Endothelial cell of umbilical vein (primary cell): ENCODE measurements at regions of chr6 and their contacts with region 1.

Region 1: DNA sequence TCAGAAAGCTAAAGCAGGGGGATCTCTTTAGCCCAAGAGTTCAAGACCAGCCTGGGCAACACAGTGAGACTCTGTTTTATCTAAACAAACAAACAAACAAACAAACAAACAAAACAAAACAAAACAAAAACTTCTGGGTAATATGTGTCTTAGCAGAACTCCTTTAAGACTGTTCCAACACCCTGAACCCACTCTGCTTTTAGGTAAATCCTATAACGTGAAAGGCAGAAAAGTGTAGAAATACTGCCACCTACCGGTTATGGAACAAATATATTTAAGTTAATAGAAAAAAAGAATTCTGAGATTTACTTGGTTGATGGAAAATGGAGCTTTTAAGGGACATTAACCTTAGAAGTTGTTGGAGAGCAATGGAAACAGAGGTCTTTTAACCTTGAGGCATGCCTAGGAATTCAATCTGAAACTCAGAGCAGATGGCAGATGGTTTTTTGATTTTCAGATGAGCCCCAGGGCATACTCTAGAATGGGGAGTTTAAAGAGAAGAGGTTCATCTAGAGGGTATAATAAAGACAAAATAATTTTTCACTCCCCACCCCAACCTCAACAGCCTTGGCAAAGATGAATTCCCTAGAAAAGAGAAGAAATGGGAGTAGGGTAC is 38.5 kb downstream of the SOD2 start:
- DNase-seq: peak; percentile 43
- H3K4me3 ChIP-seq: no peak overlapping the region
- H3K27ac ChIP-seq: no peak overlapping the region
- H3K4me1 ChIP-seq: no peaks in the 10 kb centered on the region
- H3K27me3 ChIP-seq: no peaks in the 10 kb centered on the region
- CTCF ChIP-seq: peak; percentile 17 to 27
- POLR2A ChIP-seq: no peak

Region 2: DNA sequence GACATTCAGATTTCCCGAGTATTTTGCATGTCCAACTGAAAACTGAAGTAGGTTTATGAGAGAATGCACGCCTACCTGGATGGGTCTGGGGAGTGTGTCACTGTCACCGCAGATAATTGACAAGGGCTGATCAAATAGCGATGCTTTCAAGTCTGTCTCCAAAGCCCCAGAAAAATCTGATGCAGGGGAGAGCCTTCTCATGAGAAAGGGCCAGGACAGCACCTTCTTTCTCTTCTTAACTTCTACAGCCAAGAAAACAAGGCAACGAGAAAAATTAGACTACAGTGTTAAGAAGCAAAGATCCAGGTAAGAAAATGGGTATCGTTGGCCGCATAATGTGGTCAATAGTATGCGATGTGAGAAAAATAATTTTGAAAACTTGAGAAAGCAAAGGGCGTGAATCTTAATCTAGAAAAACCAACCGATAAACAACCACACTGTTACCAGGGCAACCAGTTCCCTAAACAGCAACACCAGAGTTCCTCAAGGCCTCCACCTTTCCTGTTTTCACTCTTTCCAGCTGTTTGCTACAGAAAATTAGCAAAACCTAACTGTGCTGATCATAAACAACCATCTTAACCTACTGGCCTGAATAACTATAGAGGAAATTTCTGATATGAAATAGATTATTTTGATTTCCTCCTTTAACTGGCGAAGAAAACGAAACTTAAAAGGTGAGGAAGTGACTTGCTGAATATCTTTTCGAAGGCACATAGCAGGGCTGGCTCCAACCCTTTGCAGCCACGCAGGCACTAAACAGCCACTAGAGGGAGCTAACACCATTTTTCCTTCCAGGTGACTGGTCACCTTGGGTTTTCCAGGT is 612.4 kb before region 1 on chr6:
- CTCF ChIA-PET with region 1: interaction called, 4 read pairs
- POLR2A ChIA-PET with region 1: no interaction called
- dilution Hi-C with region 1: no loop called
- intact Hi-C with region 1: loop called (anchors 1 kb)
- DNase-seq: peak; percentile 73
- H3K4me3 ChIP-seq: no peak overlapping the region
- H3K27ac ChIP-seq: no peak overlapping the region
- H3K4me1 ChIP-seq: no peaks in the 10 kb centered on the region
- H3K27me3 ChIP-seq: peaks cover 6% of the 10 kb centered on the region in 2 experiments
- CTCF ChIP-seq: peak; percentile 93 to 96
- POLR2A ChIP-seq: no peak

Region 3: GRCh38 chr6:159174263-159174969 is 480.2 kb before region 1 on chr6:
- CTCF ChIA-PET with region 1: interaction called, 193 read pairs
- POLR2A ChIA-PET with region 1: no interaction called
- dilution Hi-C with region 1: no loop called
- intact Hi-C with region 1: loop called (anchors 1 kb)
- DNase-seq: peak; percentile 46
- H3K4me3 ChIP-seq: no peak overlapping the region
- H3K27ac ChIP-seq: no peak overlapping the region
- H3K4me1 ChIP-seq: peaks cover 3% of the 10 kb centered on the region
- H3K27me3 ChIP-seq: peaks cover 27 to 46% of the 10 kb centered on the region in 2 experiments
- CTCF ChIP-seq: peak; percentile 86 to 95
- POLR2A ChIP-seq: no peak

Region 4: DNA sequence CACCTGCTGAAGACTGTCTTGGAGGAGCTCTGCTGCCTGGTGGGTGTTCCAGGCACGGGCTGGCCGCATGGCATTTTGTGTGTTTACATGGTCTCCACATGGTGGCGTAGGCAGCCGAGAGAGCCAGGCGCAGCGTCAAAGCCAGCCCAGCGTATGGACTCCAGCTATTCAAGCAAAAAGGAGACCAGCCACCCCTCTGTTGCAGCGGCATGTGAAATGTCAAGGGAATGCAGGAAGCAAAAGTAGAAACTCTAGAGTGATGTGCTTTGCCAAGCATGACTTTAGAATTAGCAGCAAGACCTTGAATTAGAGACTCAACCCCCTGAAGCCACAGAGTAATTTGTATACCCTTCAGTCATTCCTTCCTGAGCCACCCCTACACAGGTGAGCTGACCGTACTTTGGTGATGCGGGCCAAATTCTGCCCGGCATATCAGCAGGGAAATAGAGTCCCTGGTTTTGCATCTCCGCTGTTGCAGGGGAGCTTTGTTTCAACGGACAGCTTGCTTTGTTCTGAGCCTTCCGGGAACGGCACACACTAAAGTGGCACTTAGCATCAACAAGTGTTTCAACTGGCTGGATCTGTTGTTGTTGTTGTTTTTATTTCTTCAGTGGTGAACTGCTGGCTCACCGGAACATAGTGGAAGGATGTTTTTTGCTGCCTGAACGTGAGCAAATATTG is 436.9 kb before region 1 on chr6:
- CTCF ChIA-PET with region 1: interaction called, 20 read pairs
- POLR2A ChIA-PET with region 1: no interaction called
- dilution Hi-C with region 1: no loop called
- intact Hi-C with region 1: loop called (anchors 1 kb)
- DNase-seq: peak; percentile 1
- H3K4me3 ChIP-seq: no peak overlapping the region
- H3K27ac ChIP-seq: no peak overlapping the region
- H3K4me1 ChIP-seq: no peaks in the 10 kb centered on the region
- H3K27me3 ChIP-seq: no peaks in the 10 kb centered on the region
- CTCF ChIP-seq: peak; percentile 12 to 18
- POLR2A ChIP-seq: no peak

Region 5: DNA sequence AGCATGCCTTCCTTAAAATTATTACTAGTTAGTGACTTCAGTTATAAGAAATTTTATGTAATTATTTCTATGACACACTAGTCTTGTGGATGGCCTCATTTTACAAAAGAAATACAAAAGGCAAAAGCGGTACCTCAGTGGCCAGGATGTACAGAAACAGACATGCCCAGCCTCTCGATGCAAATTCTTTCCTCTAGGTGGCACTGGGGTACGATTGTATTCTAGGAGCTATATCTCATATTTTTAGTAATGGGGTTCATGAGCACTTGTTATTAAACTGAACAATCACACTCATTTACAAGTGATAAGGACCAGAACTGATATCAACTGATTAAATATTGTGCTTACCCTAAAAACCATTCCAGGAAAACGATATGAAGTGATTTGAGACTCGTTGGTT is 21.4 kb before region 1 on chr6:
- CTCF ChIA-PET with region 1: interaction called, 46 read pairs
- POLR2A ChIA-PET with region 1: no interaction called
- dilution Hi-C with region 1: no loop called
- intact Hi-C with region 1: no loop called
- DNase-seq: peak; percentile 30
- H3K4me3 ChIP-seq: no peak overlapping the region
- H3K27ac ChIP-seq: no peak overlapping the region
- H3K4me1 ChIP-seq: no peaks in the 10 kb centered on the region
- H3K27me3 ChIP-seq: no peaks in the 10 kb centered on the region
- CTCF ChIP-seq: peak; percentile 30 to 34
- POLR2A ChIP-seq: no peak

Region 6: GRCh38 chr6:159682295-159682694 is 27.7 kb after region 1 on chr6:
- CTCF ChIA-PET with region 1: interaction called, 15 read pairs
- POLR2A ChIA-PET with region 1: no interaction called
- dilution Hi-C with region 1: no loop called
- intact Hi-C with region 1: no loop called
- DNase-seq: no peak
- H3K4me3 ChIP-seq: no peak overlapping the region
- H3K27ac ChIP-seq: no peak overlapping the region
- H3K4me1 ChIP-seq: peaks cover 18% of the 10 kb centered on the region
- H3K27me3 ChIP-seq: no peaks in the 10 kb centered on the region
- CTCF ChIP-seq: no peak
- POLR2A ChIP-seq: no peak

Region 7: GRCh38 chr6:159701411-159701999 is 46.9 kb after region 1 on chr6:
- CTCF ChIA-PET with region 1: no interaction called
- POLR2A ChIA-PET with region 1: no interaction called
- dilution Hi-C with region 1: no loop called
- intact Hi-C with region 1: no loop called
- DNase-seq: peak; percentile 42
- H3K4me3 ChIP-seq: no peak overlapping the region
- H3K27ac ChIP-seq: no peak overlapping the region
- H3K4me1 ChIP-seq: peaks cover 7% of the 10 kb centered on the region
- H3K27me3 ChIP-seq: no peaks in the 10 kb centered on the region
- CTCF ChIP-seq: no peak
- POLR2A ChIP-seq: no peak

Region 8: GRCh38 chr6:159989492-159990480 is 335.2 kb after region 1 on chr6:
- CTCF ChIA-PET with region 1: no interaction called
- POLR2A ChIA-PET with region 1: no interaction called
- dilution Hi-C with region 1: no loop called
- intact Hi-C with region 1: no loop called
- DNase-seq: no peak
- H3K4me3 ChIP-seq: no peak overlapping the region
- H3K27ac ChIP-seq: no peak overlapping the region
- H3K4me1 ChIP-seq: no peaks in the 10 kb centered on the region
- H3K27me3 ChIP-seq: peaks cover 0 to 7% of the 10 kb centered on the region in 2 experiments
- CTCF ChIP-seq: no peak
- POLR2A ChIP-seq: no peak